Panc1 (cell line): ENCODE measurements at regions of chr5 and their contacts with region 1.

Region 1: DNA sequence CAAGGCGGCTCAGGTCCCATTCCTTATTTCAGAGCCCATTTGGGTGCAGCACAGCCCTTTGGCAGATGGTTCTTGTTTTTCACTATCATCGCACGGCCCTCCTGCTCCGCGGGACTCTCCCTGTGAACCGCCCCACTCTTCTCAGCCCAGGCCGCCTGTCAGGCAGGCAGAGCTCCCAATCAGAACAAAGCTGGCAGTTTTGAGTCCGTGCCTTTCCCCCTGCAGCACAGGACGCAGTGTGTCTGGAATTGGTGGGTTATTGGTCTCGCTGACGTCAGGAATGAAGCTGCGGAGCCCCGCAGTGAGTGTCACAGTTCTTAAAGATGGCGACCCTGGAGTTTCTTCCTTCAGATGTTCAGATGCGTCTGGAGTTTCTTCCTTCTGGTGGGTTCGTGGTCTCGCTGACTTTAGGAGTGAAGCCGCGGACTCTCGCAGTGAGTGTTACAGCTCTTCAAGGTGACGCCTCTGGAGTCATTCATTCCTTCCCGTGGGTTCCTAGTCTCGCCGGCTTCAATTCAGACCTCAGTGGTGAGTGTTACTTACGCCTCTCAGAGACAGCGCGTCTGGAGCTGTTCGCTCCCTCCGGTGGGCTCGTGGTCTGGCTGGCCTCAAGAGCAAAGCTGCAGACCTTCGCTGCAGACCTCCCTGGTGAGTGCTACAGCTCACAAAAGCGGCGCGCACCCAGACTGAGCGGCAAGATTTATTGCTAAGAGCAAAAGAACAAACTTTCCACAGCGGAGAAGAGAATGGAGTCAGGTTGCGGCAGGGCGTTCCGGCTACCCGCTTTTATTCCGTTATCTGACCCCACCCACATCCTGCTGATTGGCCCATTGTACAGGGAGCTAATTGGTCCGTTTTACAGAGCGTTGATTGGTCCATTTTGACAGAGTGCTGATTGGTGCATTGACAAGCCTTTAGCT is 7.5 kb downstream of the ZDHHC11B start:
- DNase-seq: no peak
- ATAC-seq: no peak
- H3K4me3 ChIP-seq: no peak overlapping the region
- H3K27ac ChIP-seq: no peak overlapping the region
- H3K4me1 ChIP-seq: no peaks in the 10 kb centered on the region
- H3K27me3 ChIP-seq: no peaks in the 10 kb centered on the region
- CTCF ChIP-seq: no peak

Region 2: GRCh38 chr5:683551-684481 is 93.2 kb before region 1 on chr5:
- CTCF ChIA-PET with region 1: no interaction called
- POLR2A ChIA-PET with region 1: no interaction called
- in situ Hi-C with region 1: no loop called
- intact Hi-C with region 1: loop called (anchors 10 kb)
- DNase-seq: no peak
- ATAC-seq: no peak
- H3K4me3 ChIP-seq: no peak overlapping the region
- H3K27ac ChIP-seq: no peak overlapping the region
- H3K4me1 ChIP-seq: no peaks in the 10 kb centered on the region
- H3K27me3 ChIP-seq: no peaks in the 10 kb centered on the region
- CTCF ChIP-seq: no peak